PC-9 (cell line): ENCODE measurements at regions of chr22 and their contacts with region 1.

Region 1: DNA sequence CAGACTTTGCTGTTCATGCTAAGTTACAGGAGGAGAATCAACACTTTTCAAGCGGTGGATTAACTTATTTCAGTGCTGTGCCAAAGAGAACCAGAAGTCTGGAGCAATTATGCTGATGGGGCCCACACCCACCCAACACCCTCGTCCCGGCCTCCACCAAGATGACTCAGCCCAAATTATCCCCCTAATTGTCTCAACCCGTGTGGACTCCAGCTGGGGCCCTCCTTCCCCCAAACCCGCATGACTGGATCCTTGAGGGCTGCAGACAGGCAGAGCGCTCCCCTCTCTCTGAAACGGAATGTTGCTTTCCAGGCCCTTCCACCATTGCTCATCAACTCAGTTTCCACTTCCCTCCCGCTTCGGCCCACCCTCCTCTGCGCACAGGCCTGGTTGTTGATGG is 34.6 kb upstream of the MN1 start:
- DNase-seq: no peak
- H3K4me3 ChIP-seq: no peak overlapping the region
- H3K27ac ChIP-seq: no peak overlapping the region
- H3K4me1 ChIP-seq: no peaks in the 10 kb centered on the region
- H3K27me3 ChIP-seq: no peaks in the 10 kb centered on the region
- CTCF ChIP-seq: no peak

Region 2: GRCh38 chr22:26709617-26710390 is 1126.4 kb before region 1 on chr22:
- CTCF ChIA-PET with region 1: no interaction called
- POLR2A ChIA-PET with region 1: no interaction called
- intact Hi-C with region 1: loop called (anchors 10 kb)
- DNase-seq: no peak
- H3K4me3 ChIP-seq: no peak overlapping the region
- H3K27ac ChIP-seq: no peak overlapping the region
- H3K4me1 ChIP-seq: no peaks in the 10 kb centered on the region
- H3K27me3 ChIP-seq: no peaks in the 10 kb centered on the region
- CTCF ChIP-seq: no peak

Region 3: GRCh38 chr22:27853424-27853823 is 17.2 kb after region 1 on chr22:
- CTCF ChIA-PET with region 1: no interaction called
- POLR2A ChIA-PET with region 1: no interaction called
- intact Hi-C with region 1: no loop called
- DNase-seq: no peak
- H3K4me3 ChIP-seq: no peak overlapping the region
- H3K27ac ChIP-seq: no peak overlapping the region
- H3K4me1 ChIP-seq: no peaks in the 10 kb centered on the region
- H3K27me3 ChIP-seq: no peaks in the 10 kb centered on the region
- CTCF ChIP-seq: no peak